Activated CD8-positive, alpha-beta memory T cell treated with anti-CD3 and anti-CD28 coated beads, Interleukin-2, amount 10 ng/mL, durations not matched to agents 7 days and 5 days (primary cell): ENCODE measurements at regions of chr19 and their contacts with region 1.

Region 1: DNA sequence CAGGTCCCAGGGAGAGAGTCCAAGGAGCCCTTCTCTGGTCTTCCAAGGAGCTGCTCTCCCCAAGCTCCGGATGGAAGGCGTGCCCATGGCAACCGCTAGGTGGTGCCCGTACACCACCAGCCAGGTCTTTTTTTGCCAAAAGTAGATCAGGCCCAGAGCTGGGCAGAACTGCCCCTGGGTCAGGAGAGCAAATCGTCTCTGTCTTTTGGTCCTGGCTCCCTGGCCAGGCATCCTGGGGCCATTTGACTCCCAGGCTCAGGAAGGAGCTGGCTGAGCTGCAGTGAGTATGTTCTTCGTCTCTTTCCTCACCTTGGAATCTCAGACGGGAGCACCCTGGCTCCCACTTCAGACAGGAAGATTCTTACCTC is 24.6 kb upstream of the BCL3 start:
- DNase-seq: peak; percentile 87
- ATAC-seq: peak; percentile 94
- H3K4me3 Mint-ChIP-seq: no peak overlapping the region
- H3K27ac Mint-ChIP-seq: peak overlapping the region; percentile 3
- H3K4me1 Mint-ChIP-seq: peaks cover 51% of the 10 kb centered on the region
- H3K27me3 Mint-ChIP-seq: peaks cover 7% of the 10 kb centered on the region

Region 2: DNA sequence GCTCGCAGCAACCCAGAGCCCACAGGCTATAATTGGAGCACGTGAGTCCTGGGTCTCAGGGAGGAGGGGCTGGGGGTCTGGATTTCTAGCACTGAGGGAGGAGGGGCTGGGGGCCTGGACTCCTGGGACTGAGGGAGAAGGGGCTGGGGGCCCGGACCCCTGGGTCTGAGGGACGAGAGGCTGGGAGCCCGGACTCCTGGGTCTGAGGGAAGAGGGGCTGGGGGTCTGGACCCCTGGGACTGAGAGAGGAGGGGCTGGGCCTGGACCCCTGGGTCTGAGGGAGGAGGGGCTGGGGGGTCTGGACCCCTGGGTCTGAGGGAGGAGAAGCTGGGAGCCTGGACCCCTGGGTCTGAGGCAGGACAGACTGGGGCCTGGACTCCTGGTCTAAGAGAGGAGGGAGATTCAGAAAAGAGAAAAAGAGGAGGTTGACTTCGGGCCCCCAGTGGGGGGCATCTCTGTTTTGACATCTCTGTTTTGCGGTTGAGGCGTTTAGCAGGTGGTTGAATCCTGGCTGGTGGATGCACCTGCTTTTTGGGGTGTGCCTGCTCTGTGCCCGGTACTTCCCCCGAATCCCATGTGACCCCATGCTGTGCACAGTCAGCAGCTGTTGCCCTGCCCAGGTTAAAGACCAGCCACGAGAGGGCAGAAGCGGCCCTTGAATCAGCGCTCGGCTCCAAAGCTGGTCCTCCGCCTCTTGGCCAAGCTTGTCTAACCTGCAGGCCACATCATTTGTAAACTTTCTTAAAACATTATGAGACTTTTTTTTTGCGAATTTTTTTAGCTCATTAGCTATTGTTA is 69.8 kb before region 1 on chr19:
- CTCF ChIA-PET with region 1: interaction called, 19 read pairs
- DNase-seq: peak; percentile 81
- ATAC-seq: peak; percentile 83
- H3K4me3 Mint-ChIP-seq: no peak overlapping the region
- H3K27ac Mint-ChIP-seq: no peak overlapping the region
- H3K4me1 Mint-ChIP-seq: no peaks in the 10 kb centered on the region
- H3K27me3 Mint-ChIP-seq: no peaks in the 10 kb centered on the region

Region 3: GRCh38 chr19:44712864-44713515 is 10.9 kb before region 1 on chr19:
- CTCF ChIA-PET with region 1: interaction called, 34 read pairs
- DNase-seq: no peak
- ATAC-seq: no peak
- H3K4me3 Mint-ChIP-seq: no peak overlapping the region
- H3K27ac Mint-ChIP-seq: no peak overlapping the region
- H3K4me1 Mint-ChIP-seq: peaks cover 8% of the 10 kb centered on the region
- H3K27me3 Mint-ChIP-seq: peaks cover 16% of the 10 kb centered on the region

Region 4: DNA sequence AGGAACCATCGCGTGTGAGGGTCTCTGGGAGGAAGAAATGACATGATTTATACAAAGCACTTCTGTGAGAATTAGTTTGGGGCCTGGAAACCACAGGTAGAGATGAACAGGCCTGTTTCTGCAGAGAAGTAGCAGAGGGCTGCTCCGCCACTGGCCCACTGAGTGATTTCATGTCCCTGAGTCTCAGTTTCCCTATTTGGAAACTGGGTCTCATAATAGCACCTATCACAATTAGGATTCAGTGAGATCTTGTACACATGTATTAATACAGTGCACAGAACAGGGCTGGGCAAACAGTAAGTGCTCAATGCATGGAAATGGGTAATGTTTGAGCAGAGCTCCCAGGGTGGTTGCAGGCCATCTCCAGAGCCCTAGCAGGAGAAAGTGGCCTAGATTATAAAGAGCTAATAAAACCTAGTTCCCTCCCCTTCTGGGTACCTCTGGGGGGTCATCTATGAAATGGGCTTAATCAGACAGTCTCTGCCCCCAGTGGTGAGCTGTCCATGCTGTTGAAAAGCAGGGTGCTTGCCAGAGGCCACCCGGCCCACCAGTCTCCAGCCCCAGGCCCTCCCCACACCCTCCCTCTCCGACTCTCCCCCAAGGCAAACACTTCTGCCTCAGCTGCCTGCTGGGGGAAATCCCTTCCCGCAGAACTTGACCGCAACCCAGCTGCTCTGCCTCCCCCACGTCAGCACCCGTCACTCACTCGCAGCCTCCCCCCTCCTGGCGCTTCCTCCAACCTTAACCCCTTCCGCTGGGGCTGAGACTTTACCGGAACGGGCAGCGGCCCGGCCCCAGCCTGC is 29.1 kb after region 1 on chr19:
- CTCF ChIA-PET with region 1: interaction called, 25 read pairs
- DNase-seq: peak; percentile 99
- ATAC-seq: peak; percentile 79
- H3K4me3 Mint-ChIP-seq: peak overlapping the region; percentile 88
- H3K27ac Mint-ChIP-seq: peak overlapping the region; percentile 94
- H3K4me1 Mint-ChIP-seq: peaks cover 67% of the 10 kb centered on the region
- H3K27me3 Mint-ChIP-seq: no peaks in the 10 kb centered on the region

Region 5: DNA sequence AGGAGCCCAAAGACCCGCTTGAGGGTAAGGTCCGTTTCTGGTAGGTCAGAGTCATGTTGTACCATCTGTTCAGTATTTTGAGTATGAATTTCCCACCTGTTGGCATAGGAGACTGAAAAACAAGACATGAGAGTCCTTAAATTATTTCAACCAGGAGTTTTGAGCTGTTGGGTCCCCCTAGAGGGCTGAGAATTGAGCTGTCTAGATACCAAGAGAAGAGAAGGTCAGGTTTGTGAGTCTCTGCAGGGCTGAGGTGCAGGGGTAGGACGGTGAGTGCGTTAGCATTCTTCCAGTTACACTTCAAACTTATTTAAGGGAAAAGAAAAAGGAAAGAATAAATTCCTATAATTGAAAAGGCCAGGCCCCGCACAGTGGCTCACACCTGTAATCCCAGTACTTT is 58.8 kb after region 1 on chr19:
- CTCF ChIA-PET with region 1: interaction called, 406 read pairs
- DNase-seq: no peak
- ATAC-seq: no peak
- H3K4me3 Mint-ChIP-seq: no peak overlapping the region
- H3K27ac Mint-ChIP-seq: no peak overlapping the region
- H3K4me1 Mint-ChIP-seq: peaks cover 4% of the 10 kb centered on the region
- H3K27me3 Mint-ChIP-seq: peaks cover 8% of the 10 kb centered on the region